Right cardiac atrium (tissue), 5 donors: ENCODE measurements at regions of chr15 and their contacts with region 1.

Region 1: DNA sequence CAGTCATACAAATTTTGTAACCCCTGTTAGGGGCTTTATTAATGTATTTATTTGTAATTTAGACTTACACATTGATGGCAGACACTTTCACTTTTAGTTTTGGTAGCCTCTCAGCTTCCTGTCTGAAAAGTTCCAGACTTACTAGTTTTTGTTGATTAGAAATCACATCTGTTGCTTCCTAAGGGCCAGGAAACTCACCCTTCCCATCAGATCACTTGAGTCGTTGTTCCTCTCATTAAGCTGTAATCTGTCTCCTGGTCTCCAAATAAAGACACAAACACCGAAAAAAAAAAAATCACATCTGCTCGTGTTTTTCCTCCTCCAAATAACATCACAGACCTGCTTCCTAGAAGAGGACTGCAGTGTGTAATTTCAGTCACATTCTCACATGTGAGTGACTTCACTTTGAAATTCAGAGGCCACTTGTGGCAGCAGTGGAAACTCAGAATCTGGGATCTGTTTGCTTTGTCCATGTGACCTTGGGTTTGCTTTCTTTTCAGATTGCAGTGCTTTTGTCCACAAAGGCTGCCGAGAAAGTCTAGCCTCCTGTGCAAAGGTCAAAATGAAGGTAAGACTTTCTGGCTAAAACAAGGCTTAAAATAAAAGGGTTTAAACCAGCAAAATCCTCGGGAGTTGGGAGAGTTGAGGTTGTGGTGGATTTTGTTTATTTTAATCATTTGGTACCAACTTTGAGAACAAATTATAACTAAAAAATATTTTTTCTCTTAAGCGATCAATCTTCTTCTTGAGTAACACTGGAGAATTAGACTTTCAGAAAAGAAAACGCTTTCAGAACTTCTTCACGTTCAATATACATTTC is 87.0 kb downstream of the KLHL25 start:
- DNase-seq: peak in 1 of 3 donors; percentile 21
- ATAC-seq: peak; percentile 53 to 60
- H3K4me3 ChIP-seq: peak overlapping the region; percentile 12
- H3K27ac ChIP-seq: peak overlapping the region; percentile 98
- H3K4me1 ChIP-seq: peaks cover 17% of the 10 kb centered on the region
- H3K27me3 ChIP-seq: no peaks in the 10 kb centered on the region

Region 2: GRCh38 chr15:85592148-85592547 is 115.6 kb before region 1 on chr15:
- intact Hi-C with region 1: loop called in 1 of 4 experiments (anchors 10 kb)
- DNase-seq: peak in 1 of 3 donors; percentile 56
- ATAC-seq: peak; percentile 63 to 76
- H3K4me3 ChIP-seq: no peak overlapping the region
- H3K27ac ChIP-seq: no peak overlapping the region
- H3K4me1 ChIP-seq: peaks cover 2% of the 10 kb centered on the region
- H3K27me3 ChIP-seq: no peaks in the 10 kb centered on the region

Region 3: DNA sequence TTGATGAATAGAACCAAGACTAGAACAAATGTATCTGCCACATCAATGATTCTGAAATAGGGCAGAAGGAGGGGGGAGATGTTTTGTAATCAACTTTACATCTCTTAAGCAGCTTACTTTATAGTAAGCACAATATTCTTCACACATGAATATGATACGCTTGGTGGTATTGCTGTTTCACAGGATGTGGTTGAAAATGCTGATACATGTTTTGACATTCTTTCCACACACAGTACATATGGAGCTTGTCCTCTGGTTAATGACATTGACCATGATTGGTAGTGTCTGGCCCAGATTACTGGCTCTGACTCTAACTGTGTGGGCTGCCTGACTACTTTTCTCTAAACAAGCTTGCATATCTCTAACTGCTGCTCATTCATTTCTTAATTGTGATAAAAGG is 81.9 kb before region 1 on chr15:
- intact Hi-C with region 1: loop called in 1 of 4 experiments (anchors 10 kb)
- DNase-seq: no peak
- ATAC-seq: peak; percentile 8
- H3K4me3 ChIP-seq: no peak overlapping the region
- H3K27ac ChIP-seq: peak overlapping the region; percentile 81
- H3K4me1 ChIP-seq: peaks cover 10% of the 10 kb centered on the region
- H3K27me3 ChIP-seq: no peaks in the 10 kb centered on the region

Region 4: GRCh38 chr15:85800467-85801123 is 92.9 kb after region 1 on chr15:
- intact Hi-C with region 1: no loop called
- DNase-seq: peak in 2 of 3 donors; percentile 37 to 72
- ATAC-seq: peak; percentile 77 to 79
- H3K4me3 ChIP-seq: no peak overlapping the region
- H3K27ac ChIP-seq: no peak overlapping the region
- H3K4me1 ChIP-seq: no peaks in the 10 kb centered on the region
- H3K27me3 ChIP-seq: no peaks in the 10 kb centered on the region